Dendritic cell treated with granulocyte-macrophage colony-stimulating factor and Interleukin-4, amounts not matched to agents 40 ng/mL and 50 ng/mL, for 4 days (primary cell): ENCODE measurements at regions of chr16 and their contacts with region 1.

Region 1: GRCh38 chr16:23803591-23804123 is 32.1 kb upstream of the PRKCB start:
- H3K4me3 Mint-ChIP-seq: no peak overlapping the region
- H3K27ac Mint-ChIP-seq: no peak overlapping the region
- H3K4me1 Mint-ChIP-seq: peaks cover 23% of the 10 kb centered on the region
- H3K27me3 Mint-ChIP-seq: peaks cover 4% of the 10 kb centered on the region

Region 2: GRCh38 chr16:23863511-23864422 is 60.1 kb after region 1 on chr16:
- intact Hi-C with region 1: loop called (anchors 10 kb)
- H3K4me3 Mint-ChIP-seq: peak overlapping the region; percentile 65
- H3K27ac Mint-ChIP-seq: peak overlapping the region; percentile 72
- H3K4me1 Mint-ChIP-seq: peaks cover 76% of the 10 kb centered on the region
- H3K27me3 Mint-ChIP-seq: no peaks in the 10 kb centered on the region

Region 3: DNA sequence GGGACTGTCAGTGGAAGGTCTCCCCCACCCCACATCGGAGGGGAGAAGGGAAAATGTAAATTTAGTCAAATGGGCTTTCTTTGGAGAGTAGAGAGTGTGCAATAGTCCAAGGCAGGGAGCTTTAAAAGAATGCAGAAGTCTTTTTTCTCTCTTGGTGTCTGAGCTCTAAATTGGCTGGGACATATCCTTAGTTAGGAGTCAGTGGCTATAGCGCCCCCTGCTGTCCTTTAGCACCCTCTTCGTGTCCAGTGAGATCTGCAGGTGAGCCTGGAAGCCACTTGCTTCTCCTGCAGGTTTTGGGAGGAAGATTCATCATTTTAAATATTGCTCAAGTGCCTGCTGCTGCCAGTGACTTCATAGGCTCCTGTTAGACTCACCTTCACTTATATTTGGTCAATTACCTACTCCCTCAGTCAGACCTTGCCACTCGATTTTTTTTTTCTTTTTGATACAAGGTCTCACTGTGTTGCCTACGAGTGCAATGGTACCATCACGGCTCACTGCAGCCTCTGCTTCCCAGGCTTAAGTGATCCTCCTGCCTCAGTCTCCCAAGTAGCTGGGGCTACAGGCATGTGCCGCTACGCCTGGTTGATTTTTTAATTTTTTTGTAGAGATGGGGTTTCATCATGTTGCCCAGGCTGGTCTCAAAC is 206.9 kb after region 1 on chr16:
- intact Hi-C with region 1: loop called (anchors 1 kb)
- H3K4me3 Mint-ChIP-seq: no peak overlapping the region
- H3K27ac Mint-ChIP-seq: no peak overlapping the region
- H3K4me1 Mint-ChIP-seq: peaks cover 50% of the 10 kb centered on the region
- H3K27me3 Mint-ChIP-seq: no peaks in the 10 kb centered on the region

Region 4: GRCh38 chr16:24036614-24037013 is 233.0 kb after region 1 on chr16:
- intact Hi-C with region 1: loop called (anchors 1 kb)
- H3K4me3 Mint-ChIP-seq: no peak overlapping the region
- H3K27ac Mint-ChIP-seq: no peak overlapping the region
- H3K4me1 Mint-ChIP-seq: peaks cover 22% of the 10 kb centered on the region
- H3K27me3 Mint-ChIP-seq: no peaks in the 10 kb centered on the region

Region 5: DNA sequence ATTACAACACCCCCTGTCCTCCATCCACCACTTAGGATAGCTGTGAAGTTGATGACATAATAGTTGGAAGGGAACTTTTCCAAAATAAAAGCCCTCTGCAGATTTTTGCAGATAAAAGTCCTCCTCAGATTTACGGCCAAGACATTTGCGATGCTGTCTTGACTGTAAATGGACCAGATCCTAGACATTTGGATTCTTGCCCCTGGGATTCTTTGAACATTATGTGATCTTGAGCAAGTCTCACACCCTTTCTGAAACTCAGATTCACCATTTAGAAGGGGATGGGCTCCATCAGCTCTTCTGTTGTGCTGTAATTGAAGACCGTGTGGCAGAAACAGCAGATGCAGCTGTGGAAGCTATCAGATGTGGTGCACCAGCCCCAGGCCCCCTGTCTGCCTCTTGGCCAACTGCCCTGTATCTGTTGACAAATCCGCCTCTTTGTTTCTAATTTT is 298.6 kb after region 1 on chr16:
- intact Hi-C with region 1: no loop called
- H3K4me3 Mint-ChIP-seq: no peak overlapping the region
- H3K27ac Mint-ChIP-seq: no peak overlapping the region
- H3K4me1 Mint-ChIP-seq: no peaks in the 10 kb centered on the region
- H3K27me3 Mint-ChIP-seq: no peaks in the 10 kb centered on the region